ENCODE measurements at regions of chr5 and their contacts with region 1.

Region 1: DNA sequence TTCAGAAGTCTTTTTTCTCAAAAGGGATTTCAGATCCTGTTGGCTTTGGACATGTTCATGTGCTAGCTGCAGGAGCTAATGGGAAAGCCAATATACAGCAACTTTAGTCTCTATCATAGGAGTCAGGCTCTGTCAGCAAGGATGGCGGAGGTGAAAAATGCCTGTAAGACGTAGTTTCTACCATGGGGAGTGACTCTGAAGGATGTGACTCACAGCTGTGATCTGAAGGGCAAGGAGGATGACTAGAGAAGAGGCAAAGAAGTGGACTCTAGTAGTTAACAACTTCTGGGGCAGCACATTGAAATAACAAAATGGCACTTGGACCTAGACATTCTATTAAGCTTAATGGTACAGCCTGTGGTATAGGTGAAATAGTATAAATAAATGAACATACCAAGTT is 3.1 kb upstream of the NDUFS4 start:
- DNase-seq: no peak
- H3K4me3 ChIP-seq: no peak overlapping the region
- H3K27ac ChIP-seq: no peak overlapping the region
- H3K27me3 ChIP-seq: peaks cover 0 to 3% (median 0%) of the 10 kb centered on the region in 45 donors
- CTCF ChIP-seq: no peak

Region 2: DNA sequence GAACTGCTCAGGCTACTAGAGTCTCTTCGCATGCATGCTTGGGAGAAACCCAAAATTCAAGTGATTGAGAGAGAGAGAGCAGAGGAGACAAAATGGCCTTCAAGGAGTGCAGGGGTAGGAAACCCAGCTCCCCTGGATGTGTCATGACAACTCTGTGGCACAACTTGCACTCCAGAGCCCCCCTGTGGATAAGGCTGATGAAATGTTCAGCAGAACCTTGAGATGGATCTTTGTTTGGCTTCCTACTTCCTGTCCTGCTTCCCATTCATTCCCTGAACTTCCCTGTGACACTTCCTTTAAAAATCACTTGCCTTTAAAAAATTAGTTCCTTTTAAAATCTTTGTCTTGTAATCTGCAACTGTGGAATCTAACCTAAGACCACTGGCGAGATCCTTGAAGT is 206.0 kb before region 1 on chr5:
- intact Hi-C with region 1: no loop called
- DNase-seq: no peak
- H3K4me3 ChIP-seq: no peak overlapping the region
- H3K27ac ChIP-seq: no peak overlapping the region
- H3K27me3 ChIP-seq: peaks cover 0 to 5% (median 0%) of the 10 kb centered on the region in 45 donors
- CTCF ChIP-seq: no peak

Region 3: DNA sequence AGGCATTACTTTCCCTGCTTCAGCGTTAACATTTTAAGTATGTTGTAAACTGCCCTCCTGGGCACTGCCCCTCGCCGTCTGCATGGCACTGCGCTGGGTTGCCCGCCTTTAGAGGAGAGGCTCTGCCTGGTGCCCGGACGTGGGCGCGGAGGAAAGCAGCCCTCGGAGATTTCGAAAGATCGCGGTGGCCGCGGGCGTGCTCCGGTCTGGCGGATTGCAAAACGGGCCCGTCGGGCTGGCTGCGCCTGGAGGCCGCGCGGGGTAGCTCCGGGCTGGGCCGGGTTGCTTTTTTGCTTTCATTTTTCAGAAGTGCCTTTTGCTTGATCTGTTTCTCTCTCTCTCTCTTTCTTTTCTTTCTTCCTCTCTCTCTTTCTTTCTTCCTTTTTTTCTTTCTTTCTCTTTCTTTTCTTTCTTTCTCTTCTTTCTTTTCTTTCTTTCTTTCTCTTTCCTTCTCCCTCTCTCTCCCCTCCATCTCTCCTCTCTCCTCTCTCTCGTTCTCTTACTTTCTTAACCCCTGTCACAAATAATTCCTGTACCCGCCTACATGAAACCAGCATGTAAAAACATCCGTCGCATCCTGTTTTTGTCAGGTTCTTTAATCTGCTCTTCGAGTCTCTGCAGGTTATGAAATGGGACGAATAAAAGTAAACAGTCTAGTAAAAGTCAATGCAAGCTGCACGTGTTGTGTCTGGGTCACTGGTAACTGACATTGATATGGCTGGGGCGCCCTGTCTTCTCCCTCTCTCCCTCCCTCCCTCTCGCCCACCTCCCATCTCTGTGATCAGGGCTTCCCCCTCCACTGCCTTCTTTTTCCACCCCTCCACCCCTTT is 75.3 kb before region 1 on chr5:
- intact Hi-C with region 1: loop called in 1 of 2 experiments (anchors 5 kb)
- DNase-seq: peak in 7 of 10 donors; percentile 14 to 65 (median 44)
- H3K4me3 ChIP-seq: peak overlapping the region; percentile 32 to 83 (median 61)
- H3K27ac ChIP-seq: no peak overlapping the region
- H3K27me3 ChIP-seq: peaks cover 0 to 28% (median 4%) of the 10 kb centered on the region in 45 donors
- CTCF ChIP-seq: peak in 12 of 56 donors; percentile 5 to 34 (median 18)